ENCODE measurements at regions of chrX and their contacts with region 1.

Region 1: GRCh38 chrX:149871940-149872339 is 9.0 kb upstream of the MAGEA8 start:
- DNase-seq: peak; percentile 52
- H3K4me3 Mint-ChIP-seq: no peak overlapping the region
- H3K27ac Mint-ChIP-seq: no peak overlapping the region
- H3K4me1 Mint-ChIP-seq: peaks cover 14% of the 10 kb centered on the region
- H3K27me3 Mint-ChIP-seq: peaks cover 18% of the 10 kb centered on the region

Region 2: DNA sequence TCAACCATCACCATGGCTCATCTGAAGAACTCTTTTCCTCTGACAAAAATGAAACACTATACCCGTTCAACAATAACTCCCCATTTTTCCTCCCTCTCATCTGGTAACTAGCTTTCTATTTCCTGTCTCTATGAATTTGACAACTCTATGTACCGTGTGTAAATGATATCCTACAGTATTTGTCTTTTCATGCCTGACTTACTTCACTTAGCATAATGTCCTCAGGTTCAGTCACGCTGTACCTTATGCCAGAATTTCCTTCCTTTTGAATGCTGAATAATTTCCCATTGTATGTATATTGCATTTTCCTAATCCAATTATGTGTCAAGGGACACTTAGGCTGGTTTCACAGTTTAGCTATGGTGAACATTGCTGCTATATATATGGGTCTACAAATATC is 72.0 kb before region 1 on chrX:
- intact Hi-C with region 1: no loop called
- DNase-seq: no peak
- H3K4me3 Mint-ChIP-seq: peak overlapping the region; percentile 54
- H3K27ac Mint-ChIP-seq: peak overlapping the region; percentile 77
- H3K4me1 Mint-ChIP-seq: peaks cover 31% of the 10 kb centered on the region
- H3K27me3 Mint-ChIP-seq: no peaks in the 10 kb centered on the region

Region 3: DNA sequence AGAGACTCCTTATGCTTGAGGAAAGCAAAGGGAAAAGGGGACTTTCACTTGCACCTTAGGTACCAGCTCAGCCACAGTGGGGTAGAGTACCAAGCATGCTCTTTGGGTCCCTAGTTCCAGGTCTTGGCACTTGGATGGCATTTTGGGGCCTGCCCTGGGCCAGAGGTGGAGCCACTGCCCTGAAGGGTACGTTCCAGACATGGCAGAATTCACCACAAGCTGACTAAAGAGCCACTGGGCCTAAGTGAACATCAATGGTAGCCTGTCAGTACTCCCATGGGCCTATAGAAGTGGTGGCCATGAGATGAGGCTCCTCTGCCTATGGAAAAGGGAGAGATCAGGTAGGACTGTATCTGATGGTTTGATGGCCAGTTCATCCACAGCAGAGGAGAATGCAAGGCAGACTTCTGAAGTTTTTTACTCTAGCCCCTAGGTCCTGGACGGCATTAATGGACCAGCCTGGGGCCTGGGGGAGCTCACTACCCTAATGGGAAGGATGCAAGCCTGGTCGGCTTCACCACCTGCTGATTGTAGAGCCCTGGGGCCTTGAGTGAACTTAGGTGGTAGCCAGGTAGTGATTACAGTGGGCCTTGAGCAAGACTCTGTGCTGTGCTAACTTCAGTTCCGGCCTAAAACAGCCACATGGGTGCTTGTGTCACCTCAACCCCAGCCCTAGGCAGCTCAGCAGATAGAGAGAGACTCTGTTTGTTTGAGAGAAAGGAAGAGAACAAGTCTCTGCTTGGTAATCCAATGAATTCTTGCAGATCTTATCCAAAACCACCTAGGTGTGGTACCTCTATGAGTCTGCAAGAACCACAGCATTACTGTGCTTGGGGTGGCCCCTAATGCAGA is 37.6 kb after region 1 on chrX:
- intact Hi-C with region 1: loop called (anchors 1 kb)
- DNase-seq: no peak
- H3K4me3 Mint-ChIP-seq: no peak overlapping the region
- H3K27ac Mint-ChIP-seq: no peak overlapping the region
- H3K4me1 Mint-ChIP-seq: peaks cover 15% of the 10 kb centered on the region
- H3K27me3 Mint-ChIP-seq: no peaks in the 10 kb centered on the region

Region 4: GRCh38 chrX:149938427-149939270 is 66.7 kb after region 1 on chrX and contains the start of gene EOLA2:
- intact Hi-C with region 1: loop called (anchors 2 kb)
- DNase-seq: peak; percentile 89
- H3K4me3 Mint-ChIP-seq: peak within 1 kb of the TSS; percentile 92
- H3K27ac Mint-ChIP-seq: peak within 1 kb of the TSS; percentile 100
- H3K4me1 Mint-ChIP-seq: peaks cover 4% of the 10 kb centered on the region
- H3K27me3 Mint-ChIP-seq: no peaks in the 10 kb centered on the region
- total RNA-seq, gene EOLA2: 54.2 and 63.3 TPM in 2 replicates